ENCODE measurements at regions of chr5 and their contacts with region 1.

Region 1: DNA sequence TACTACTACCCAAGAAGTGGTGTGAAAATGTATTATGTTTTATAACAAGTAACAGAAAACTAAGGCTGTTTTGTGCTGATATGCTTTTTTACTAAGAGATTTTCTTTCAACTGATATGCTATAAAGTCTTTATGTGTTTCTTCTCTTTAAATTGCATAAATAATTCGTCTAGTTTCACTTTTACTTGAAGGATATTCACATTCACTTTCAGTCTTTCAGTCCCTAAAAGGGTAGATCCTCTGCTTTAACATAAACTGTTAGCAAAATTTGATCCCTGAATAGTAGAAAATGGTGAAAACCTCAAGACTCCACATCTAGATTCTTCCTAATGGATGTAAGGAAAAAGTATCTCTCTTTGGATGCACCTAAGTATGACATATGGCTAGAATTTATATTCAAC is 69.0 kb upstream of the FST start:
- DNase-seq: no peak

Region 2: GRCh38 chr5:53362521-53362941 is 48.9 kb before region 1 on chr5:
- intact Hi-C with region 1: loop called (anchors 5 kb)
- DNase-seq: no peak

Region 3: DNA sequence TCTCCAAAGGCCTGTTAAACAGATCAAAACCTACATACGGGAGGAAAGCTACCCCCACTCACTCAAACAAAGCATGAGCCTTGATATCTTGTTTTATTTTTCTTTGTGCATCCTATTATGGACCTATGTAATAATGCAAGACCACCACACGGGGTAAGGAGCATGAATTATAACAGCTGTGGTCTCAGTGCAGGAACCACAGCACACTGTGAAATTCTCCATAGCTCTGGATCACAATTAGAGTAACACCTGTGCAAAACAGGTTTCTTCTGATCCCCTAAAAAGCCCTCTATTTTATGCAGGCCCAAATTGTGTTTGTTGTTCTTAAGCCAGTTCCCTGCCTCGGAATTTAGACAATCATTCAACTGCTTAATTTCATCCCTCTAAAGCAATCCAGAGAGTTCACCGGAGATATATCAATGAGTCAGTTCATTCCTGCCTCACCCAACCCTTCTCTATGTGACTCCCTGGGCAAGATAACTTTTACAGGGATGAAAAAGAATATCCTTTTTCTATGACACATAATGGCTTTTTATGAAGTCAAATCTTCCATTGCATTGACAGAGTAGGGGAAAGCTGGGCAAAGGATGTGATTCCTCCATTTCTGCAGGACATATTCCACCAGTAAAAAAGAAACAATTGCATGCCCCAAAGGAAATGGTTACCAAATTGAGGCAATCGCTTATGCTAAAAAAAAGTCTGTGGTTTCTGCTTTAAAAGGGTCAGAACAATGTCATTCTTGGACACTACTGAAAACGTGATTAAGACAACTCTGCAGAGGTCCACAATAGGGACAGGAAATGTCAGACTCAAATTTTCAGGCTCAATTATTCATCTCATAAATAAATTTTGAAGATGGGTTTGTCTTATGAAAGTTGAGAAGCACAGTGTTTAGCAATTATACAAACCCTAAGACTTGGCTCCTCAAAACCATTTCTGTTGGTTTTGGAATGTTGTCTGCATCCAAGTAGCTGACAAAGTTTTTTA is 27.4 kb after region 1 on chr5:
- intact Hi-C with region 1: no loop called
- DNase-seq: no peak

Measured in cardiac septum (tissue), 1 donor.